A673 (cell line): ENCODE measurements at regions of chr16 and their contacts with region 1.

Region 1: GRCh38 chr16:28158136-28158535 is 53.6 kb downstream of the XPO6 start:
- DNase-seq: no peak
- H3K4me3 ChIP-seq: no peak overlapping the region
- H3K27ac ChIP-seq: no peak overlapping the region
- H3K4me1 ChIP-seq: peaks cover 25% of the 10 kb centered on the region
- H3K27me3 ChIP-seq: no peaks in the 10 kb centered on the region
- CTCF ChIP-seq: no peak

Region 2: GRCh38 chr16:28108590-28109247 is 49.4 kb before region 1 on chr16:
- CTCF ChIA-PET with region 1: no interaction called
- POLR2A ChIA-PET with region 1: no interaction called
- intact Hi-C with region 1: loop called (anchors 10 kb)
- DNase-seq: no peak
- H3K4me3 ChIP-seq: no peak overlapping the region
- H3K27ac ChIP-seq: no peak overlapping the region
- H3K4me1 ChIP-seq: no peaks in the 10 kb centered on the region
- H3K27me3 ChIP-seq: no peaks in the 10 kb centered on the region
- CTCF ChIP-seq: no peak